Ovary (tissue), 10 donors: ENCODE measurements at regions of chr1 and their contacts with region 1.

Region 1: DNA sequence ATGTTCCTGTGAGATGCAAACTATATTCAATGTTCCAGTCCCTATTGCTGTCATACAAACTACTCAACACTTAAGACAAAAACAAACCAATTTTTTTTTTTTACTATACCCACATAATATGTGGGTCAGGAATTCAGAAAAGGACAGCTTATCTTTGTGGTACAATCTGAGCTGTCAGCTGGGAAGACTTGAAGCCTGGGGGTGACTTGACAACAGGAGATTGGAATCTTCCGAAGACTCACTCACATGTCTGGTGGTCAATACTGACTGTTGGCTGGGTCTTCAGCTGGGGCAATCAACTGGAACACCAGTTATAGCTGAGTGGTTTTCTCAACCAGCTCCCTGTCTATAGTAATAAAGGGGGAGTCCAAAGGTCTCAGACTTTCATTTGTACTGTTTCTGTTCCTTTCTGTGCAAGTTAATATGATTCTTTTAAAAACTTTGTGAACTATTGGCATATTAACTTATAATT is 81.7 kb upstream of the ATP1B1 start:
- DNase-seq: no peak
- H3K4me3 ChIP-seq: no peak overlapping the region
- H3K27ac ChIP-seq: no peak overlapping the region
- H3K4me1 ChIP-seq: peaks cover 6% of the 10 kb centered on the region
- H3K27me3 ChIP-seq: no peaks in the 10 kb centered on the region
- CTCF ChIP-seq: no peak
- EP300 ChIP-seq: no peak
- POLR2A ChIP-seq: no peak

Region 2: GRCh38 chr1:168972887-168973286 is 51.9 kb before region 1 on chr1:
- intact Hi-C with region 1: loop called in 1 of 4 experiments (anchors 5 kb)
- DNase-seq: peak in 3 of 5 donors; percentile 18 to 23 (median 20)
- H3K4me3 ChIP-seq: no peak overlapping the region
- H3K27ac ChIP-seq: peak overlapping the region in 1 of 2 donors; percentile 12
- H3K4me1 ChIP-seq: peaks cover 12% of the 10 kb centered on the region
- H3K27me3 ChIP-seq: no peaks in the 10 kb centered on the region
- CTCF ChIP-seq: no peak
- EP300 ChIP-seq: no peak
- POLR2A ChIP-seq: no peak